IMR-90 (cell line): ENCODE measurements at regions of chr4 and their contacts with region 1.

Region 1: DNA sequence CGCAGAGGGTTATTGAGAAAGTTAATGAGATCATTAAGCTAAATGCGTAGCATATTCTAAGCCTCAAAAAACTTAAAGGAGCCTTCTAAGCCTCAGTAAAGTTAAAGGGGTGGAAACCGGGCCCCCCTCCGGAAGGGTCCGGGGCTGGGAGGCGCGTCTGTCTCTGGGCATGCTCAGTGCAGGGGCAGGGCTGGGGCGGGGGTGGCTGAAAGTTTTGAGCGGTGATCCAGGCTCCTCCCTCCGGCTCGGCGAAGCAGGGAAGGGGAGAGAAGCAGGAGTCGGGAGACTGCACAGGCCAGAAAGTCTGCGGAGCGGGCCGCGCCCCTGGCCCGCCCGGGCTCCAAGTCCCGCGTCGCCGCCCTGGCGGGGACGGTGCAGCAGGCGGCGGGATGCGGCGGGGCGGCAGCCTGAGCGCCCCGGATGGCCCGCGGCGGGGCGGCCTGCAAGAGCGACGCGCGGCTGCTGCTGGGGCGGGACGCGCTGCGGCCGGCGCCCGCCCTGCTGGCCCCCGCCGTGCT is at the start of gene EVC:
- DNase-seq: peak; percentile 74
- ATAC-seq: peak; percentile 92
- H3K4me3 ChIP-seq: peak within 1 kb of the TSS; percentile 83
- H3K27ac ChIP-seq: peak within 1 kb of the TSS; percentile 90
- H3K4me1 ChIP-seq: peaks cover 33% of the 10 kb centered on the region
- H3K27me3 ChIP-seq: no peaks in the 10 kb centered on the region
- CTCF ChIP-seq: 0 out of 2 replicates have a peak, but pooled peaks have one; percentile 4
- POLR2A ChIP-seq: peak; percentile 63
- RAD21 ChIP-seq: no peak
- total RNA-seq, gene EVC: 15.3 and 16.8 TPM in 2 replicates

Region 2: DNA sequence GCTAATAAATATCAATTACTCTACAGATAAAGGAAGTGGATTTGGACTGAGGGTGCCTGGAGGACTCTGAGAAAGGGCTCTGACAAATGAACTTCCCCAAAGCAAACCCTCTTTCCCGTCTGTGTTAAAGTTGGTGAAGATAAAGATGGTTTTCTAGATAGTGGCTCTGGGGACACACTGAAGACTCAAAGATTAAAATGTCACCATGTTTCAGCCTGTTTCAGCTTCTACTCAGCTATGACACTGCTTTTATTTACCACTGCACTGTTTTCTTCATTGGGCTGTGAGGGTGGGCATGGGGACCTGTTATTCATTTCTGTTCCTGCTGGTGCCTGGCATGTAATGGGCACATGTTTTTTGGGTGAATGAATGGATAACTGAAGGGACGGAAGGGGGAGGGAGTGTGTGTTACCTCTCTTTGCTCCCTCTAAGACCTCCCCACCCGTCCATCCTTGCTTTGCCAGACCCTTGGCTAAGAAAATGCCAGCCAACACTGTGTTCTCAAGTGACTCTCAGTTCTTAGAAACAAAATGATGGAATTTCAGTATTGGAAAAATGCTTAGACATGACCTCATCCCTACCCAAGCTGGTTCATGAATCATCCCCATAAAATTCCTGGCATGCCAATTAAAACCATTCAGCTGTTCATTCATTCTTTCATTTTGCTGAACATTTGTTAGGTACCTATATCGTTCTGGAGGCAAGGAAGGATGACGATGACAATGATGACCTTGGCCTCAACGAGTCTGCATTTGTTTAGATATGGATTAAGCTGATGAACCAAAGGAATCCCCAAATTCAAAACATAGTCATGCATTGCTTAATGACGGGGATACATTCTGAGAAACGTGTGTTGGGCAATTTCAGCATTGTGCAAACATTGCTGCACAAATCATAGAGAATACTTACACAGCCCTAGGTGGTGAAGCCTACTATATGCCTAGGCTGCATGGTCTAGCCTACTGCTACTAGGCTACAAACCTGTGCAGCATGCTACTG is 673.2 kb before region 1 on chr4:
- CTCF ChIA-PET with region 1: no interaction called
- POLR2A ChIA-PET with region 1: no interaction called
- dilution Hi-C with region 1: no loop called
- in situ Hi-C with region 1: no loop called
- intact Hi-C with region 1: loop called (anchors 5 kb)
- DNase-seq: peak; percentile 99
- ATAC-seq: peak; percentile 84
- H3K4me3 ChIP-seq: no peak overlapping the region
- H3K27ac ChIP-seq: peak overlapping the region; percentile 96
- H3K4me1 ChIP-seq: peaks cover 35% of the 10 kb centered on the region
- H3K27me3 ChIP-seq: no peaks in the 10 kb centered on the region
- CTCF ChIP-seq: no peak
- POLR2A ChIP-seq: no peak
- RAD21 ChIP-seq: no peak

Region 3: DNA sequence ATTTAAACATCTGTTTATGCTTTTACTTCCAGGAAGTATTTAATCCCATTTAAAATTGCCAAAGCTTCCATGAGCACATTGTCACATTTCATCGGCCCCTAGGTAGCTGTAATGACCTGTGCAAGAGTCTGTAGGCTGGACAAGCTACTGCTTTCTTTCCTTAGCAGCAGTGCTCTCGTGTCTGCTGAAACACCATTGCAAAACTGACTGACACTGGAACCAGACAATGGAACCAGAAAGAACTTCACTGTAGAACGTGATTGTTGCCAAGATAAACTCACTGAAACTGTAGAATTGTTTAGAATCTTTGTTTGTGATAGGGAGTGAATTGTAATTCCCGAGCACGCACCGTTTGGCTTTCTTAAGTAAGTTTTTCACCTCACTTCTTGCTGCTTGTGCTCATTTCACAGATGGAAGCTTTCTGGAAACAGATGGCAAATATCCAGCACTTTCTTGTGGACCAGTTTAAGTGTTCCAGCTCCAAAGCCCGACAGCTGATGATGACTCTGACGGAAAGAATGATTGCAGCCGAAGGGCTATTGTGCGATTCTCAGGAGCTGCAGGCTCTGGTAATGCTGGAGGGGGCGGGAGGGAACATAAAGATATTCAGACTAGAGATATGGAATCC is 36.8 kb after region 1 on chr4:
- CTCF ChIA-PET with region 1: no interaction called
- POLR2A ChIA-PET with region 1: no interaction called
- dilution Hi-C with region 1: no loop called
- in situ Hi-C with region 1: no loop called
- intact Hi-C with region 1: loop called (anchors 1 kb)
- DNase-seq: peak; percentile 99
- ATAC-seq: peak; percentile 64
- H3K4me3 ChIP-seq: no peak overlapping the region
- H3K27ac ChIP-seq: peak overlapping the region; percentile 67
- H3K4me1 ChIP-seq: peaks cover 44% of the 10 kb centered on the region
- H3K27me3 ChIP-seq: no peaks in the 10 kb centered on the region
- CTCF ChIP-seq: no peak
- POLR2A ChIP-seq: no peak
- RAD21 ChIP-seq: no peak

Region 4: DNA sequence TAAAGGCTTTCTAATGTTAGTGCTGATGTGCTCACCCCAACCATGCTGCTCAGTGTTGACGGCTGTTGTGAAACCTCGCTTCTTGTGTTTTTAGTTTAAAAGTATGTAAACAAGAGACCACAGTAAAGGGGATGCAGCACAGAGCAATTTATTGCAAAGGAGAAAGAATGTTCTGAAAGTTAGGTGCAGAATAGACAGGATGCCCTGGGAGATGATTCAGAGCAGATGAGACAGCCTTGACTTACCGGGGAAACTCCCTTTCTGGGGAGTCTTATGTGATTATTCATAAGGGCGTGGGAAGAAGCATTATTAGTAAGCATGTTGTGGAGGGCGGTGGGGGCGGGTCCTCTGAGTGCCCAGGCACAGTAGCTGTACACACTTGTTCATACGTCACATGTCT is 47.7 kb after region 1 on chr4:
- CTCF ChIA-PET with region 1: interaction called, 3 read pairs
- POLR2A ChIA-PET with region 1: no interaction called
- dilution Hi-C with region 1: no loop called
- in situ Hi-C with region 1: no loop called
- intact Hi-C with region 1: loop called (anchors 2 kb)
- DNase-seq: peak; percentile 99
- ATAC-seq: peak; percentile 91
- H3K4me3 ChIP-seq: no peak overlapping the region
- H3K27ac ChIP-seq: peak overlapping the region; percentile 50
- H3K4me1 ChIP-seq: peaks cover 16% of the 10 kb centered on the region
- H3K27me3 ChIP-seq: no peaks in the 10 kb centered on the region
- CTCF ChIP-seq: no peak
- POLR2A ChIP-seq: no peak
- RAD21 ChIP-seq: 0 out of 2 replicates have a peak, but pooled peaks have one; percentile 16

Region 5: DNA sequence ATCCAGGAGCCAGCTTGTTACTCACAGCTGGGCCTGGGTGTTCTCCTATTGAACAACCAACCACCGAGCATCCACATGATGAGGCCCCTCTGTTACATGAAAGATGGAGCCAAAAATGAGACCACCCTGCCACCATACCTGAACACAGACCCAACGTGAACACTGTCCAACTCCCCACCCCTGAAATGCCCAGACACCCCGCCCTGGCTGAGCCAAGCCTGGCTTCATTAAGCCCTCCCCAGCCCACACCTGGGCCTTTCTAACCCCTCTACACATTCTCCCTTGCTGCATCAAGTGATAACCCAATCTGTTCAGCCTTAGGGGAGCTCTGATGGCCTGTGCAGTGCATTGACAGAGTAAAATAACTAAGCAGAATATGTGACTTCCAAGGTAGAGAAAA is 80.6 kb after region 1 on chr4:
- CTCF ChIA-PET with region 1: no interaction called
- POLR2A ChIA-PET with region 1: no interaction called
- dilution Hi-C with region 1: no loop called
- in situ Hi-C with region 1: no loop called
- intact Hi-C with region 1: loop called (anchors 2 kb)
- DNase-seq: no peak
- ATAC-seq: no peak
- H3K4me3 ChIP-seq: no peak overlapping the region
- H3K27ac ChIP-seq: no peak overlapping the region
- H3K4me1 ChIP-seq: no peaks in the 10 kb centered on the region
- H3K27me3 ChIP-seq: no peaks in the 10 kb centered on the region
- CTCF ChIP-seq: no peak
- POLR2A ChIP-seq: no peak
- RAD21 ChIP-seq: no peak

Region 6: GRCh38 chr4:5863461-5864113 is 152.6 kb after region 1 on chr4:
- CTCF ChIA-PET with region 1: no interaction called
- POLR2A ChIA-PET with region 1: no interaction called
- dilution Hi-C with region 1: no loop called
- in situ Hi-C with region 1: no loop called
- intact Hi-C with region 1: no loop called
- DNase-seq: peak; percentile 96
- ATAC-seq: peak; percentile 93
- H3K4me3 ChIP-seq: no peak overlapping the region
- H3K27ac ChIP-seq: no peak overlapping the region
- H3K4me1 ChIP-seq: peaks cover 6% of the 10 kb centered on the region; the same call in 1 of the 2 replicates
- H3K27me3 ChIP-seq: no peaks in the 10 kb centered on the region
- CTCF ChIP-seq: no peak
- POLR2A ChIP-seq: no peak
- RAD21 ChIP-seq: no peak

Region 7: GRCh38 chr4:5888222-5888701 is 177.2 kb after region 1 on chr4:
- CTCF ChIA-PET with region 1: no interaction called
- POLR2A ChIA-PET with region 1: no interaction called
- dilution Hi-C with region 1: no loop called
- in situ Hi-C with region 1: no loop called
- intact Hi-C with region 1: loop called (anchors 5 kb)
- DNase-seq: no peak
- ATAC-seq: peak; percentile 16; the same call in 1 of the 2 replicates
- H3K4me3 ChIP-seq: peak overlapping the region; percentile 44; the same call in 1 of the 2 replicates
- H3K27ac ChIP-seq: no peak overlapping the region
- H3K4me1 ChIP-seq: no peaks in the 10 kb centered on the region
- H3K27me3 ChIP-seq: peaks cover 47% of the 10 kb centered on the region
- CTCF ChIP-seq: no peak
- POLR2A ChIP-seq: no peak
- RAD21 ChIP-seq: no peak